Activated CD4-positive, alpha-beta T cell treated with anti-CD3 and anti-CD28 coated beads for 36 hours (primary cell): ENCODE measurements at regions of chr12 and their contacts with region 1.

Region 1: GRCh38 chr12:48388430-48388829 is 37.7 kb upstream of the ZNF641 start:
- DNase-seq: no peak
- ATAC-seq: no peak
- H3K4me3 Mint-ChIP-seq: no peak overlapping the region
- H3K27ac Mint-ChIP-seq: no peak overlapping the region
- H3K4me1 Mint-ChIP-seq: no peaks in the 10 kb centered on the region
- H3K27me3 Mint-ChIP-seq: peaks cover 15% of the 10 kb centered on the region

Region 2: DNA sequence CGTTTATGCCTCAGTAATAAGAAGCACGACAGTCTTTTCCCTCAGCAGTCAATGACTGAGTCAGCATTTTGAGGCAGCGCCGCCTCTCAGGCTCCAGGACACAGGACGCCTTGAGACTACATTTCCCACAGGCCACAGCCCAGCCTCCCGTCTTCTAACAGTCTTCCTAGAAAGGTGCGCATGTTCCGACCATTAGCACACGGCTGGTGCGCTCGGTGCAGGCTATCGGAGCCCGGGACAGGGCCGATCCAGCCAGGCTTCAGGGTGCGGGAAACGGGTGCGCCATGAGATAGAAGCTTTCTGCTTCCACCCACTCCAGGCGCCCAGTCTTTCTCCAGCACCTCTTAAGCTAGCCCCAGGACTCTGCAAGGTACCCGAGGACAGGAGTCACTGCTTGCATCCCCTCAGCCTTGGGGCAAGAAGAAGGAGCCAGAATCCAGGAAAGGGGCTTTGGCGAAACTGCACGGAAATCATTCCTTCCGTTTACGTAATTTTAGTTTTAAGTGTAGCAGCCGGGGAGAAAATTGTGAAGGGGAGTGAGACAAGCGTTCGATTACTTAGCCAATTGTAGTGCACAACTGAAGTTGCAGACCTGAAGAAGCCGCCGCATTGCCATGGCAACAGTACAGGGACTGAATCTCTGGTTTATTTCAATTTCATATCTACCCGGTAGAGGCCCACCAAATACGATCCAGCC is 91.7 kb before region 1 on chr12:
- CTCF ChIA-PET with region 1: no interaction called
- POLR2A ChIA-PET with region 1: interaction called, 10 read pairs
- intact Hi-C with region 1: no loop called
- DNase-seq: peak; percentile 76
- ATAC-seq: peak; percentile 95
- H3K4me3 Mint-ChIP-seq: peak overlapping the region; percentile 59
- H3K27ac Mint-ChIP-seq: no peak overlapping the region
- H3K4me1 Mint-ChIP-seq: peaks cover 10% of the 10 kb centered on the region
- H3K27me3 Mint-ChIP-seq: peaks cover 8% of the 10 kb centered on the region